Esophagus squamous epithelium (tissue), 5 donors: ENCODE measurements at regions of chr5 and their contacts with region 1.

Region 1: DNA sequence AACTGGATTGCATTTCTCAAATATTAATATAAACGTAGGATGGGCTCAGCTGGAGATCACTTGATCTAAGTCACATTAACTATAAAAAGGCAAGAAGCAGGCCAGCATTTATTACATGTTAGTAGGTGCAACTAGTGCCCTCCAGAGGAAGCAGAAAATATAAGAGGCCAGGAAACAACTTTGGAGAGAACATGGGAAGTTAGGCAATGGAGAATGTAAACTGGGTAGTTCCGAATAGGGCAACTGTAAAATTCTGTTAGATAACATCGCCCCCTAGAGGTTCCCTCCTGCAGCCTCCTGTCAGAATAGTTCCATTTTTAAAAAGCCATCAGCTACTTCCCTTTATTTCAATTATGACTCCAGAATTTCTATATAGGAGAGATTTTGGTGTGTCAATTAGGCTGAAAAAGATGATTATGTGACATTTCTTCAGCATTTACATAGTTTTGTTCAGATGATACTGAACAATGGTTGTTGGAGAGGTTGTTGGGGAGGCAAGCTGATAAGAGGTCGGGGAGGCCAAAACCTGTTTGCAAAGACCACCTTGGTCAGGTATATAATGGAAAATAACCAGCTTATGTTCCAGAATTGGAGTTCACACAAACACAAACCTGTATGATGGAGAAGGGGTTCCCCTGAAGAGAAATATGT is 22.4 kb downstream of the CCL28 start:
- DNase-seq: no peak
- H3K4me3 ChIP-seq: no peak overlapping the region
- H3K27ac ChIP-seq: no peak overlapping the region
- H3K4me1 ChIP-seq: peaks cover 0 to 8% (median 0%) of the 10 kb centered on the region in 3 donors
- H3K27me3 ChIP-seq: no peaks in the 10 kb centered on the region
- CTCF ChIP-seq: peak; percentile 87 to 95 (median 91)
- POLR2A ChIP-seq: no peak

Region 2: DNA sequence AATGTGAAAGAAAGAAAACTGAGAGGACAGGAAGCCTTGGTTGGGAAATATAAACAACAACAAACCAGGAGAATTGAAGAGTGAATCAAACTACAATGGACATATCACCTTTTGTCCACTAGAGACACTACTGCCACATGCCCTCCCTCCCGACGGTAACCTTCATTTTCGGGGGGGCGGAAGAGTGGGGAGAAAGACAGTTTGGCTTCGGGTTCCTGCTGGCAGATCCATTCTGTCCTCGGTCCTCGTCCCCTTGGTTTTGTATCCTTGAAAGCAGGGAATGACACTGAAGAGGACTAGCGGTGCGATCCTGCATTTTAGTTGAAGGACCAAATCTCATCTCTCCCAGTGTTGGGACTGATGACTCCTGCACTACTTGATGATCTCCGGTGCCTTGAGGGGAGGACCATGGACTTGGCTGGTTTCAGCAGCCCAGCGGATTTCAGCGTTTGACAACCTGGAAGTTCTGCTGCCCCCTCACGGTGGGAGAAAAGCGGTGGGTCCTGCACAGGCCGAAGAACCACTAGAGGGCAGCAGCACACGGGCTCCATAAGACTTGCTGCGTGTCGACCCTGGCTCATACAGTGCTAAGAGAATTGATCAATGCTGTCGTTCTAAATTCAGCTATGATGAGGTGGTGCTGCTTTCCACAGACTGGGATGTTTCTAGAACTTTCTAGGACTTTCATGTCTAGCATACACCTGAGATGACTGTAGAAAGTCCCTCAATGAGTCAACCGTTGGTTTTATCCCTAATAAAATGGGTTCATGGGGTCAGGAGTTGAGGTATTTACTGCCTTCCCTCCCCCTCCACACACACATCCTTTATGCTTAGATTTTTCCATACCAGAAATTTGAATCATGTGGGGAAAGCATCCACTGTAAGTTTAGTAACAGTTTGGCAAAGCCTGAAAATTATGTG is 284.2 kb before region 1 on chr5:
- intact Hi-C with region 1: loop called (anchors 10 kb)
- DNase-seq: peak; percentile 23
- H3K4me3 ChIP-seq: peak overlapping the region; percentile 34 to 64 (median 52)
- H3K27ac ChIP-seq: peak overlapping the region; percentile 4 to 79 (median 73)
- H3K4me1 ChIP-seq: peaks cover 0 to 14% (median 5%) of the 10 kb centered on the region in 3 donors
- H3K27me3 ChIP-seq: no peaks in the 10 kb centered on the region
- CTCF ChIP-seq: peak; percentile 95 to 100 (median 98)
- POLR2A ChIP-seq: no peak

Region 3: GRCh38 chr5:43294226-43294625 is 95.6 kb before region 1 on chr5:
- intact Hi-C with region 1: no loop called
- DNase-seq: no peak
- H3K4me3 ChIP-seq: no peak overlapping the region
- H3K27ac ChIP-seq: no peak overlapping the region
- H3K4me1 ChIP-seq: no peaks in the 10 kb centered on the region
- H3K27me3 ChIP-seq: no peaks in the 10 kb centered on the region
- CTCF ChIP-seq: no peak
- POLR2A ChIP-seq: no peak